ENCODE measurements at regions of chr7 and their contacts with region 1.

Region 1: DNA sequence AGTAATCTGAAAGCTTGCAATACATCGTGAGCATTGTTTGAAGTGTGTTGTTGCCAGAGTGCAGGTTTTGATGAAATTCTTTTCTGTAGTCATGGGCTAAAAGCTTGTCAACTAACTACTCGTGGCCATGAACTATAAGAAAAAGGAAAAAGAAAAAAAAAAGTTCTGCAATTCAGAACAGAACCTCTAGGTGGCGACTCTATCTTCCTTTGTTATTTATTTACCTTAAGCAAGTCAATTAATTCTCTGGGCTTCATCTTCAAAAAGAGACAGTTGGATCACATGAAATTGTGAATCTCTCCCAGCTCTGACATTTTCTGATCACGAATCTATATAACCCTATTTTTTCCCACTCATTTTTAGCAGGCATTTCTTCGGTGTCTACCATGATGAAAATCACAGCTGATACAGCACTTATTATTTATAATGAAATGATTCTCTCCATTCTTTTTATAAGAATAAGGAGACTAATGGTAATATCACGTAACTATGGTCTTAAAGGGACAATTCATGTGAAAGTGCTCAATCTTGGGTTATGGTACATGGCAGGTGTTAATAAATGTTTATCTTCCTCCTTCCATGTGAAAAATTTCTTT is 18.8 kb downstream of the TMEM196 start:
- DNase-seq: peak; percentile 51
- ATAC-seq: 0 out of 2 replicates have a peak, but pooled peaks have one; percentile 46
- H3K4me3 ChIP-seq: no peak overlapping the region
- H3K27ac ChIP-seq: no peak overlapping the region
- H3K4me1 ChIP-seq: no peaks in the 10 kb centered on the region
- H3K27me3 ChIP-seq: no peaks in the 10 kb centered on the region
- CTCF ChIP-seq: peak; percentile 58 to 80 (median 65)
- POLR2A ChIP-seq: no peak
- RAD21 ChIP-seq: peak; percentile 80

Region 2: GRCh38 chr7:19560111-19560883 is 194.3 kb before region 1 on chr7:
- CTCF ChIA-PET with region 1: no interaction called
- POLR2A ChIA-PET with region 1: no interaction called
- RAD21 ChIA-PET with region 1: no interaction called
- intact Hi-C with region 1: no loop called
- DNase-seq: no peak
- ATAC-seq: no peak
- H3K4me3 ChIP-seq: no peak overlapping the region
- H3K27ac ChIP-seq: no peak overlapping the region
- H3K4me1 ChIP-seq: no peaks in the 10 kb centered on the region
- H3K27me3 ChIP-seq: no peaks in the 10 kb centered on the region
- CTCF ChIP-seq: no peak
- POLR2A ChIP-seq: no peak
- RAD21 ChIP-seq: no peak

Region 3: GRCh38 chr7:19969859-19970498 is 215.4 kb after region 1 on chr7:
- CTCF ChIA-PET with region 1: no interaction called
- POLR2A ChIA-PET with region 1: no interaction called
- RAD21 ChIA-PET with region 1: no interaction called
- intact Hi-C with region 1: loop called (anchors 10 kb)
- DNase-seq: peak; percentile 57
- ATAC-seq: peak; percentile 95
- H3K4me3 ChIP-seq: peak overlapping the region in 1 of 2 experiments; percentile 42; a peak in 2 of 4 replicates
- H3K27ac ChIP-seq: peak overlapping the region; percentile 54; the same call in 1 of the 2 replicates
- H3K4me1 ChIP-seq: peaks cover 15 to 28% of the 10 kb centered on the region in 2 experiments
- H3K27me3 ChIP-seq: no peaks in the 10 kb centered on the region
- CTCF ChIP-seq: no peak
- POLR2A ChIP-seq: no peak
- RAD21 ChIP-seq: peak; percentile 13; the same call in 1 of the 2 replicates

Region 4: GRCh38 chr7:20172736-20173334 is 418.2 kb after region 1 on chr7:
- CTCF ChIA-PET with region 1: interaction called, 12 read pairs
- POLR2A ChIA-PET with region 1: interaction called, 3 read pairs
- RAD21 ChIA-PET with region 1: interaction called, 3 to 6 read pairs
- intact Hi-C with region 1: loop called (anchors 2 kb)
- DNase-seq: peak; percentile 52
- ATAC-seq: peak; percentile 98
- H3K4me3 ChIP-seq: no peak overlapping the region
- H3K27ac ChIP-seq: no peak overlapping the region
- H3K4me1 ChIP-seq: no peaks in the 10 kb centered on the region
- H3K27me3 ChIP-seq: no peaks in the 10 kb centered on the region
- CTCF ChIP-seq: peak; percentile 61 to 80 (median 78); a peak in 5 of 6 replicates
- POLR2A ChIP-seq: no peak
- RAD21 ChIP-seq: peak; percentile 77

Region 5: GRCh38 chr7:20199015-20199737 is 444.6 kb after region 1 on chr7:
- CTCF ChIA-PET with region 1: interaction called, 11 read pairs
- POLR2A ChIA-PET with region 1: no interaction called
- RAD21 ChIA-PET with region 1: no interaction called
- intact Hi-C with region 1: loop called (anchors 5 kb)
- DNase-seq: peak; percentile 94
- ATAC-seq: peak; percentile 95
- H3K4me3 ChIP-seq: peak overlapping the region in 1 of 2 experiments; percentile 27; a peak in 2 of 4 replicates
- H3K27ac ChIP-seq: peak overlapping the region; percentile 47; the same call in 1 of the 2 replicates
- H3K4me1 ChIP-seq: peaks cover 20 to 39% of the 10 kb centered on the region in 2 experiments
- H3K27me3 ChIP-seq: no peaks in the 10 kb centered on the region
- CTCF ChIP-seq: no peak
- POLR2A ChIP-seq: no peak
- RAD21 ChIP-seq: no peak

Measured in HCT116 (cell line).